Mammary epithelial cell (primary cell): ENCODE measurements at regions of chr10 and their contacts with region 1.

Region 1: GRCh38 chr10:34666008-34666705 is 148.9 kb downstream of the PARD3 start:
- DNase-seq: peak; percentile 89
- H3K4me3 ChIP-seq: peak overlapping the region in 1 of 3 experiments; percentile 10
- H3K27ac ChIP-seq: peak overlapping the region; percentile 84
- H3K4me1 ChIP-seq: peaks cover 44% of the 10 kb centered on the region
- H3K27me3 ChIP-seq: no peaks in the 10 kb centered on the region
- CTCF ChIP-seq: peak; percentile 60 to 71

Region 2: DNA sequence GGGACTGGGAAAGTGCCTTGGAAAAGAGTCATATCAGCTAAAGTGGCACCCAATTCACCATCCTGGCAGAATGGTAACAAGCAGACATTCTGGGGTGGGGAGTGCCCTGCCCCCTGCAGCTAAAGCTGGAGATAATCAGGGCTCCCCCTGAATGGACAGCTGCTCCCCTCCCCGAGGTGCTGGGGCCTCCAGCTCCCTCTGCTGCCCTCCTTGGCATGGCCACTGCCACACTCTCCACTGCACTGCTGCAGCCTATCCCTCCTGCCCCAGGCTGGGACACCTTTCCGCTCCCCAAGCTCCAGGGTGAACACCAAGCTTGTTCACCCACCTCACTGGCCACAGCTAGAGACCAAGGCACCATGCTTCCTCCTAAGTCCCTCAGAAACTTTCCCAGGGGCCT is 158.7 kb after region 1 on chr10:
- CTCF ChIA-PET with region 1: interaction called, 3 read pairs
- dilution Hi-C with region 1: no loop called
- in situ Hi-C with region 1: no loop called
- intact Hi-C with region 1: loop called (anchors 5 kb)
- DNase-seq: no peak
- H3K4me3 ChIP-seq: no peak overlapping the region
- H3K27ac ChIP-seq: no peak overlapping the region
- H3K4me1 ChIP-seq: peaks cover 5% of the 10 kb centered on the region
- H3K27me3 ChIP-seq: no peaks in the 10 kb centered on the region
- CTCF ChIP-seq: no peak

Region 3: DNA sequence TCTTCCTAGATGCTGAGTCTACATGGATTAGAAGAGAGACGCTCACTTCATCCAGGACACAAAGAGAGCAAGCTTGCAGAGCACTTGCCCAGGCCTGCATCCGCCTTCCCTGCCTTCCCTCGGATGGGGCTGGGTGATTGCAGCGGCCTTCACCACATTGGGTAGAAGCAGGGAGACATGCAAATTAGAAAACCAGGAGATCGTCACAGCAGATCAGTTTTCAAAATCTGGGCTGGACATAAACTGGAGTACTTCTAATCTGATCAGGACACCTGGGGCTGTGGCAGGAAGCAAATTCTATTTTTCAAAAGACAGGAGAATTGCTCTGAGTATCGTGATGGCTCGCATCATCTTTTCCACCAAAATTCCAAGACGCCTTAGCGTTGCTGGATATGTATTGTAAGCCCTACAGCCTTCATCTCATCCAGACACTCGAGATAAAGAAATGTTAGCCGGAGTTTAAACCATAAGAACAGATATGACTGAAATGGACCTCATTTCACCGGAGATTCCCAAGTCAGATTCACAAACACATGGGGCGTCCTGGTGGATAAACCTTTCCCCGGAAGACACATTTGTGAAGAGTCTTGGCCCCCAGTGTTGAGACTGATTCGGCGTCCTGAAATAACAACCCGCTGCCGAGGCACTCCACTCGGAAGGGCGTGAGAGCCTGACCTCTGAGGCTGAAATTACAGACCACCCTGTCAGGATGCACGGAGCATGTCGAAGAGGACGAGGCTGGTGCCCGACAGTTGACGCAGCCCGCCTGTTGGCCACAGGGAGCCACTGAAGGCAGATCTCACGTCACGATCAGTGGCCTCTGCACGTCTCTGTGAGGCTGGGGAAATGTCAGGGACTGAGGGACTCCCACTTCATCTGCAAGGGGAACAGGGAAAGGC is 240.2 kb after region 1 on chr10:
- CTCF ChIA-PET with region 1: no interaction called
- dilution Hi-C with region 1: loop called (anchors 5 kb)
- in situ Hi-C with region 1: no loop called
- intact Hi-C with region 1: no loop called
- DNase-seq: peak; percentile 93
- H3K4me3 ChIP-seq: no peak overlapping the region
- H3K27ac ChIP-seq: peak overlapping the region; percentile 21
- H3K4me1 ChIP-seq: peaks cover 23% of the 10 kb centered on the region
- H3K27me3 ChIP-seq: no peaks in the 10 kb centered on the region
- CTCF ChIP-seq: no peak

Region 4: GRCh38 chr10:34960983-34961382 is 294.8 kb after region 1 on chr10:
- CTCF ChIA-PET with region 1: no interaction called
- dilution Hi-C with region 1: no loop called
- in situ Hi-C with region 1: loop called in 1 of 2 experiments (anchors 25 kb)
- intact Hi-C with region 1: no loop called
- DNase-seq: peak; percentile 18
- H3K4me3 ChIP-seq: no peak overlapping the region
- H3K27ac ChIP-seq: no peak overlapping the region
- H3K4me1 ChIP-seq: no peaks in the 10 kb centered on the region
- H3K27me3 ChIP-seq: no peaks in the 10 kb centered on the region
- CTCF ChIP-seq: peak; percentile 18 to 48

Region 5: DNA sequence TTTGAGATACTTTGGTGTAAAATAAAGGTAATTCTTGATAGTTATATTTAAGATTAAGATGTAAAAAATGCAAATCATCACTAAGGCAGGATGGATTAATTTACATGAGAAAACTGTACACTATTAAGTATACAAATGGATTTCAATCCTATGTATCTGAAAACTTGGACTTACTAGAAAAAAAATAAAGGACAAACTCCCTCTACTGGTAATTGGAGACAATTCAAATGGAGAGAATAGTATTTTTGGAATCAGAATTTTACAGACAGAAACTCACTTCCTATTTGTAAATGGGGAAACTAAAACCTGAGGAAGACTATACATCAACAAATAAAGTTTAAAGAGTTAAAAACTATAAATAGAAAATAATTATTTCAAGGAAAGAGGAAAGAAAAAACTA is 361.4 kb after region 1 on chr10:
- CTCF ChIA-PET with region 1: interaction called, 8 read pairs
- dilution Hi-C with region 1: no loop called
- in situ Hi-C with region 1: no loop called
- intact Hi-C with region 1: loop called (anchors 5 kb)
- DNase-seq: no peak
- H3K4me3 ChIP-seq: no peak overlapping the region
- H3K27ac ChIP-seq: no peak overlapping the region
- H3K4me1 ChIP-seq: peaks cover 10% of the 10 kb centered on the region
- H3K27me3 ChIP-seq: no peaks in the 10 kb centered on the region
- CTCF ChIP-seq: peak; percentile 32 to 41

Region 6: GRCh38 chr10:35218339-35218955 is 552.3 kb after region 1 on chr10:
- CTCF ChIA-PET with region 1: no interaction called
- dilution Hi-C with region 1: no loop called
- in situ Hi-C with region 1: loop called in 1 of 2 experiments (anchors 25 kb)
- intact Hi-C with region 1: loop called (anchors 5 kb)
- DNase-seq: peak; percentile 65
- H3K4me3 ChIP-seq: no peak overlapping the region
- H3K27ac ChIP-seq: no peak overlapping the region
- H3K4me1 ChIP-seq: no peaks in the 10 kb centered on the region
- H3K27me3 ChIP-seq: no peaks in the 10 kb centered on the region
- CTCF ChIP-seq: peak; percentile 74 to 77